Activated T-helper 2 cell treated with anti-CD3 and anti-CD28 coated beads, Interferon-gamma antibody, Interleukin-2, Interleukin-4, amounts not matched to agents 10 μg/mL and 5 μg/mL and 100 μg/mL, durations not matched to agents 14 hours and 24 hours and 36 hours (primary cell): ENCODE measurements at regions of chr6 and their contacts with region 1.

Region 1: GRCh38 chr6:11496152-11497060 is 41.1 kb upstream of the TMEM170B start:
- DNase-seq: peak; percentile 55
- H3K4me3 Mint-ChIP-seq: no peak overlapping the region
- H3K27ac Mint-ChIP-seq: no peak overlapping the region
- H3K4me1 Mint-ChIP-seq: peaks cover 3% of the 10 kb centered on the region
- H3K27me3 Mint-ChIP-seq: no peaks in the 10 kb centered on the region

Region 2: DNA sequence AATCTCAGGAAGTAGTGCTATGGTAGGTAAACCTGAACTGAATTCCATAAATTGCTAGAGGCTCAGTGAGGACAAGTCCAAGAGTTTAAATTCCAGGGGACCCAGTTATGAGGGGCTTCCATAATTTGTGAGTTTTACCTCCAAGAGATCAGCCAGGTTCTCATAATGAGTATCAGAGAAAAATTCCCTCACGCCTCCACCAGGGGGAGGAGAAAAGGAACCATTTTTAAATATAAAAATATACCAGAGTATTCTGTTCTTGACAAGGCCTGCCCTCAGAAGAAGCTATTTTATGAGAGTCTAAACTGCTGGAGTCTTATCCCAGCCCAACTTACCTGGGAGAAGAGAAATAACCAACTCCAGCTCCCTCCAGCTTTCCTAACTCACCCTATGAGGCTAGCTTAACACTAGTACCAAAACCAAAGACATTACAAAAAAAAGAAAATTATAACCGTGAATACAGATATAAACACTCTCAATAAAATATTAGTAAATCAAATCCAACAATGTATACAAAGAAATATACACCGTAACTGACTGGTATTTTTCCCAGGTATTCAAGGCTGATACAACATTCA is 1240.2 kb before region 1 on chr6:
- intact Hi-C with region 1: no loop called
- DNase-seq: no peak
- H3K4me3 Mint-ChIP-seq: no peak overlapping the region
- H3K27ac Mint-ChIP-seq: no peak overlapping the region
- H3K4me1 Mint-ChIP-seq: no peaks in the 10 kb centered on the region
- H3K27me3 Mint-ChIP-seq: no peaks in the 10 kb centered on the region

Region 3: DNA sequence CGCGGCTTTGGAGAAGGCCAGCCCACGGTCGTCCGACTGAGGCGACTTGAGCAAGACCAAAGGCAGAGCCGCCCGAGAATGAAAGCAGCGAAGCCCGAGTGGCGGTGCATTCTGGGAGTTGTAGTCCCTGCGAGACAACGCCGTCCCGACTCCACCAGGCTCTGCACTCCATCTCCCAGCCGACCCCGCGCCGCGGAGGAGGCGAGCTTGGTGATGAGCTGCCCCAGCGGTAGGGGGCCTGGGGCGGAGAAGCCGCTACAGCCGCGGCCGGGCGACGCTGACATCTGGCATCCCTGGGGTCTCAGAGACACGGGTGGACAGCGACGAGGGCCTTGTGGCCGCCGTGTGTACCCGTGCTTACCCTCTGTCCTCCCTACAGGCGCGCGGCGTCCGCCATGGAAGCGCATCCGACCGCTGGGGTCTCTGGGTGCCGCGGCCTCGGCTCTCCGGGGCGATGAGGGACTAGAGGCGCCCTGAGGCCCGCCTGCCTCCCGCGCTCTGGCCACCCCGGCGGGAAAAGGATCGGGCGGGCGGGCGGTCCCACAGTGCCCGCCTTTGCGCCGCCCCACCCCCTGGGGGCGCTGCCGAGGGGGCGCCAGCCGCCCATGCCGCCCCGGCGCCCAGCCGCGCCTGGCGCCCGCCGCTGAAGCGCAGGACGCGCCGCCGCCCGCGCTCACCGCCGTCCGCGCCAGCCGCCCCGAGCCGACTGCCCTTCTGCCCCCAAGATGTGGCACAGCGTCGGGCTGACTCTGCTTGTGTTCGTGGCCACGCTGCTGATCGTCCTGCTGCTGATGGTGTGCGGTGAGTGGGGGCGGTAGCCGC is 402.6 kb before region 1 on chr6 and contains the start of gene SMIM13:
- intact Hi-C with region 1: loop called (anchors 5 kb)
- DNase-seq: peak; percentile 92
- H3K4me3 Mint-ChIP-seq: peak within 1 kb of the TSS; percentile 96
- H3K27ac Mint-ChIP-seq: peak within 1 kb of the TSS; percentile 98
- H3K4me1 Mint-ChIP-seq: peaks cover 22% of the 10 kb centered on the region
- H3K27me3 Mint-ChIP-seq: peaks cover 2% of the 10 kb centered on the region
- total RNA-seq, gene SMIM13: 12.2 and 12.3 TPM in 2 replicates

Region 4: GRCh38 chr6:11172501-11173332 is 323.7 kb before region 1 on chr6:
- intact Hi-C with region 1: loop called (anchors 1 kb)
- DNase-seq: peak; percentile 50
- H3K4me3 Mint-ChIP-seq: peak overlapping the region; percentile 22
- H3K27ac Mint-ChIP-seq: no peak overlapping the region
- H3K4me1 Mint-ChIP-seq: peaks cover 18% of the 10 kb centered on the region
- H3K27me3 Mint-ChIP-seq: no peaks in the 10 kb centered on the region

Region 5: GRCh38 chr6:11232193-11232769 is 264.1 kb before region 1 on chr6 and contains the start of gene NEDD9:
- intact Hi-C with region 1: loop called (anchors 2 kb)
- DNase-seq: peak; percentile 94
- H3K4me3 Mint-ChIP-seq: peak within 1 kb of the TSS; percentile 93
- H3K27ac Mint-ChIP-seq: peak within 1 kb of the TSS; percentile 99
- H3K4me1 Mint-ChIP-seq: peaks cover 64% of the 10 kb centered on the region
- H3K27me3 Mint-ChIP-seq: no peaks in the 10 kb centered on the region
- total RNA-seq, gene NEDD9: 34.5 and 35.0 TPM in 2 replicates

Region 6: DNA sequence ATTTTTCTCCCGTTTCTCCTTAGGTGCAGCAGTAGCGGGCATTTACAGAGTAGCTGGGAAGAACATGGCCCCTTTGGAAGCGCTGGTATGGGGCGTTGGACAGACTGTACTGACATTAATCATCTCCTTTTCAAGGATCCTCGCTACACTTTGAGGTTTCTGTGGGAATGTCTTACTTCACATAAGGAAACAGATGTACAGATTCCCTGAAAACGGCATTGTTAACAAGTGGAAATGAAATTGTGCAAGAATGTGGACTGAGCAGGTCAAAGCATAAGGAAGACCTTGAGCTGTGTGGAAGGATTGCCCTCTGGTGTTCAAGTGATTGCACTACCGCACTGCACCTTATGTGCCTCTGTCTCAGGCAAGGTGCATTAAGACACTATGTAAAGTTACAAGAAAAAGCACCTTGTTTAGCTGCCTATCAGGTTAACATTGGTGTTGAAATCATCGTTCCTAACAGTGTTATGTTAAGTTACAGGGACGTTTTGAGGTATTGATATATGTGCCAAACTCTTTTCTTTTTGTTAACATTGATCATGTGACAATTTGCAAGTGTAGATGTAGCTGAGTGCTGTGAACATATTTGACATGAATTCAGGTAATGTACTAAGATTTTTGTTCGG is 79.1 kb after region 1 on chr6:
- intact Hi-C with region 1: loop called (anchors 5 kb)
- DNase-seq: peak; percentile 24
- H3K4me3 Mint-ChIP-seq: no peak overlapping the region
- H3K27ac Mint-ChIP-seq: no peak overlapping the region
- H3K4me1 Mint-ChIP-seq: peaks cover 3% of the 10 kb centered on the region
- H3K27me3 Mint-ChIP-seq: peaks cover 2% of the 10 kb centered on the region